Body of pancreas (tissue), 4 donors: ENCODE measurements at regions of chr11 and their contacts with region 1.

Region 1: DNA sequence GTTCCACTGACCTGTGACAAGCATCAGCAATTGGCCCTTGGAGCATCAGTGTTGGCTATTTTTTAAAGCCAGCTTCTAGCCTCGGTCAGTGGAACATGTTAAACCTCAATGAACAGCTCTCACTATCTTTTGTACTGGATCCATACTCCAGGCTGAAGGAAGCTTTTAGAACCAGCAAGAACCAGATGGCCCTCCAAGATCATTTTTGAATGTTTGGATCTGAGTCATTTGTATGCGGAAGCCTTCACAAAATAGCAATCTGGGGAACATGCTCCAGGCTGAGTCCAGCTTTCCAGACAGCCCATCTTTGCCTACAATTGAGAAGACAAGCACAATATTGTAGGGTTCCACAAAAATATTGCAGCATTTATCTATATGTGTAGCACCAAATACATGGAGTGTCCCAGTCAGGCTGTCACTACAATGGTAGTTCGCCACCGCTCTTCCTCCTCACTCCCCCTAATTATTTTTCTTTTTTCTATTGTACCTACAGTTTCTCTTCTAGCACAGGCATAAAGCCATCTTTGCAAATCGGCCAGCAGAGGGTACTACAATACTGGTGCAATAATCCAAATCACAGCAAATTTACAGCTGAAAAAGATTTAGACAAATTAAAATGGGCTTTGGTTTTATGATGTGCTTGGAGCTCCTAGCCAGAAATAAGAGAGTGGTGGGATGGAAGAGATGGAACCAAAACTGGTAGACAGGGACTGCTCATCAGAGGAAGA is 177.4 kb upstream of the BLID start:
- DNase-seq: no peak
- ATAC-seq: no peak
- H3K4me3 ChIP-seq: no peak overlapping the region
- H3K27ac ChIP-seq: no peak overlapping the region
- H3K4me1 ChIP-seq: no peaks in the 10 kb centered on the region
- H3K27me3 ChIP-seq: no peaks in the 10 kb centered on the region
- CTCF ChIP-seq: peak in 1 of 7 experiments; percentile 11
- POLR2A ChIP-seq: no peak

Region 2: DNA sequence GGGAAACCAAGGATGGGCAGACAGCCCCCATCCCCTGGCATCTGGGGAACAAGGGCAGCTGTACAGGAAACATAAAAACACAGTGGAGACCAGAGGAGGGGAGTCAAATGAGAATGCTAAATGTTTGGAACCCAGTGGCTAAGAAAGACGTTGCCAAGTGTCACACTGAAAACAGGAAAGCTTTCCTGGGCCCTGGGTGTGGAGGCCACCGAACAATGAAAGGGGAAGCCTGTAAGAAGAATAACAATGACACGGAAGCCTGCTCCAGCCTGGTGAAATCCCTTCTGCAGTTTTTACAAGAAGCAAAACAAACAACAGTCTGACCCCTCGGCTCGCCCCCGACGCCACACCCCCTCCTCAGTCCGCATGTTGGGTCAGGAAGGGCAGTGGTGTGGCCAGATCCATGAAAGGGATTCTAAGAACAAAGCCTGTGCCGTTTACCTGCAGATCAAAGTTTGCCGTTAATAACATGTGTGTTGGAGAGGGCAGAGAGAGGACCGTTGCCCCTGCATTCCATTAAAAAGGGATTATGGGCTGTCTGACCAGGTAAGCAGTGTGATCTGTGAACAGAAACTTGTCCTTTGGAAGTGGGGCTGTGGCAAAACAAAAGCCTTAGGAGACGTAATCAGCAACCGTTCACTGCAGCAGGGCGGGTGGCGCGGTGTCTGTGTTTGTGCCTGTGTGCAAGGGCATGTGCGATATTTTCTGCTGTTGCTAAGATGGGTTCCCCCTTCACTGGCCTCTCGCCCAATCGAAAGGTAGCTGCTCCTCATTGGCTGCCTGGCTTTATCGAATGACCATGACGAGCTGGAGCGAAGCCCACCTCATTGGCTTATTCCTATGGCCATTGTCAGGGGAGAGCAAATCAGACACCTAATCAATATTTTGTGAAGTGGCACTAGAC is 63.7 kb before region 1 on chr11:
- intact Hi-C with region 1: loop called (anchors 5 kb)
- DNase-seq: peak in 1 of 4 donors; percentile 15
- ATAC-seq: no peak
- H3K4me3 ChIP-seq: no peak overlapping the region
- H3K27ac ChIP-seq: no peak overlapping the region
- H3K4me1 ChIP-seq: no peaks in the 10 kb centered on the region
- H3K27me3 ChIP-seq: no peaks in the 10 kb centered on the region
- CTCF ChIP-seq: no peak
- POLR2A ChIP-seq: no peak